Activated T-helper 1 cell treated with anti-CD3 and anti-CD28 coated beads, Interleukin-12 subunit alpha, Interleukin-12 subunit beta, Interleukin-2, Interleukin-4 antibody, amounts not matched to agents 30 ng/mL and 10 ng/mL and 1 ng/mL, durations not matched to agents 14 hours and 24 hours and 36 hours (primary cell): ENCODE measurements at regions of chr6 and their contacts with region 1.

Region 1: DNA sequence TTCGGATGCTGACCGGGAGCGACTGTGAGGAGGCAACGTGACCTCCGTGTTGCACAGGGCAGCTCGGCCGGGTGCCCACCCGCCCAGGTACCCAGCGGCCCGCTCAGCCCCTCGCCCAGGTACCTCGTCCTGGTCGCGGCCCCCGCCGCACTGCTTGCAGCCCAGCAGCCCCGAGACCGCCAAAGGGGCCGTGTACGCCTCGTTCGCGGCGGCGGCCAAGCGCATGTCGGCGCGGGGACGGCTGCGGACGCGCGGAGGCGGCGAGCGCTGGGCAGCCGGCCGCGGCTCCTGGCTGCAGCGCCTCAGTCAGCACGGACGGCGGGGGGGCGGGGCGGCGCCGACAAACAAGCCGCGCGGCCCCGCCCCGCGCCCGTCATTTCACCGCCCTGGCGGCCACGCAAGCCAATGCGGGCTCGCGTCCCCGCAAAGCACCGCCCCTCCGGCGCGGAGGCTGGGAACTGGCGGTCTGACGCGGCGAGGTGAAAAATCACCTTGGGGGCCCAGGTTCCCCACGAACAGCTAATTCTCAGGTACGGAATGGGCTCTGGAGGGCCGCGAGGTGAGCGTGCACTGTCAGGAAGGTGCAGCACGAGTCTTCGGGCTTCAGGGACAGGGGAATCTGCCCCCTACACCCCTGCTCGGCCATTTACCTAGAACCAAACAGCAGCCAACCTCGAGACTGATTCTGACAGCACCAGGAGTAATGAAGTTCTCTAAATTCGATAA is 85.2 kb downstream of the SESN1 start:
- DNase-seq: peak; percentile 87
- H3K4me3 Mint-ChIP-seq: peak overlapping the region; percentile 92
- H3K27ac Mint-ChIP-seq: peak overlapping the region; percentile 84
- H3K4me1 Mint-ChIP-seq: peaks cover 31% of the 10 kb centered on the region
- H3K27me3 Mint-ChIP-seq: no peaks in the 10 kb centered on the region

Region 2: GRCh38 chr6:108558372-108559096 is 450.9 kb before region 1 on chr6:
- intact Hi-C with region 1: loop called (anchors 1 kb)
- DNase-seq: peak; percentile 95
- H3K4me3 Mint-ChIP-seq: peak overlapping the region; percentile 88
- H3K27ac Mint-ChIP-seq: peak overlapping the region; percentile 91
- H3K4me1 Mint-ChIP-seq: peaks cover 32% of the 10 kb centered on the region
- H3K27me3 Mint-ChIP-seq: peaks cover 47% of the 10 kb centered on the region

Region 3: DNA sequence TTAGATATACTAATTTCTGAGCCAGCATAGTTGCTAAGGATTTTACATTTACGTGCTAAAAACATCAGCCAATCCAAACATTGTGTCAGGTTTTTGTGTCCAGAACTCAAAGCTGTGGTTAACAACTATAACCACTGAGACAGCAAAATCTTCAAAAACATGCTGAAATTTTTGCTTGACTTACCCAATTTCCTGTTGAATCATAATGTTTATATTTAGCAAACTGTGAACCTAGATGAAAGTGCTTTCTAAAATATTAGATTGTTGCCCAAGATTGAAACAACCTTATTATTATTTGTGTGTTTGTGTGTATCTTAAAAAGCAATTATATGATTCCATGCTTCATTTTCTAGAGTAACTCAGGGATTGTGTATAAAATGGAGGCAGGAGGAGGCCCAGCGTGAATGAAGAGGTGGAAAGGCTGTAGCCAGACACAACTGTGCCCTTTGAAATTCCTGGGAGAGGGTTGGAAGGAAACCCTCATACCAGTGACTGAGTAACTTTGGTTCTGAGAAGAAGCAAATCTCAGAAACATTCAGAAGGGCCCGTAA is 113.2 kb before region 1 on chr6:
- intact Hi-C with region 1: loop called (anchors 1 kb)
- DNase-seq: no peak
- H3K4me3 Mint-ChIP-seq: peak overlapping the region; percentile 61
- H3K27ac Mint-ChIP-seq: peak overlapping the region; percentile 87
- H3K4me1 Mint-ChIP-seq: peaks cover 50% of the 10 kb centered on the region
- H3K27me3 Mint-ChIP-seq: peaks cover 13% of the 10 kb centered on the region

Region 4: GRCh38 chr6:109059571-109060021 is 50.2 kb after region 1 on chr6:
- intact Hi-C with region 1: loop called (anchors 2 kb)
- DNase-seq: no peak
- H3K4me3 Mint-ChIP-seq: no peak overlapping the region
- H3K27ac Mint-ChIP-seq: peak overlapping the region; percentile 72
- H3K4me1 Mint-ChIP-seq: peaks cover 13% of the 10 kb centered on the region
- H3K27me3 Mint-ChIP-seq: peaks cover 9% of the 10 kb centered on the region

Region 5: DNA sequence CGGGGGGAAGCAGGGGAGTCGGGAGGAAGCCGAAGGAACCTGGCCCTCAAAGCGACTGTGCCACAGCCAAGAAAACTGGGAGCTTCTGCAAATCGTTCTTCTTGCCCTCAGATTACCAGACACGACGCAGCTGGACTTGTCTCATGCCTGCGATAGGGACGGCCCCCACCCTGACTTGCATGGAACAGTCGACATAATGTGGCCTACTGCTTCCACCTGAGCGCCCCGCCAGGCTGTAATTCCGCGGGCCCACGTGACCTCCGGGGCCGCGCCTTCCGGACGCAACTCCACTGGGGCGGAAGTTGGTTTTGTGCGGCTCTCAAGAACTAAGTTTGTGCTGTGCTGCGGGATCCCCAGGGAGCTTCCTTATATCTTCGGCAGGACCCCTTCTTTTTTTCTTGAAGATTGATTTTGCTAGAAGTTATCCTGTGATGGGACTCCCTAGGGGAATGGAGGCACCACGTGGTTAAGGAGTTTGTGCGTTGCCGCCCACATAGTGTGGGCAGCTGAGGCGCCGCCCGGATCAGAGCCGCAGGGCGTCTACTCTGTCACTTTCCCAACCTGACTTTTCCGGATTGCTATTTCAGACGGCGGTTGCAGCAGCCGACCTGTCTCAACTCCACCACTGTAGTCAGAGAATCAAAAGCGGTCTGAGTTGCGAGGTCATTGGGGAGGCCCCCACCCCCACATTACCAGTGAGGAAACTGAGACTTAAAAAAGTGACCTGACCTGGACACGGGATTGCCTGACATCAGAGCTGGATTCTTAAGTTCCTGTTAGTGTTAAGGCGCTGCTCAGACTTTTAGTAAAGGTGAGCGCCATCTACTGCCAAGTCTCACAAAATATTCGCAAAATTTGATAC is 373.4 kb after region 1 on chr6:
- intact Hi-C with region 1: loop called (anchors 2 kb)
- DNase-seq: peak; percentile 88
- H3K4me3 Mint-ChIP-seq: peak overlapping the region; percentile 89
- H3K27ac Mint-ChIP-seq: peak overlapping the region; percentile 98
- H3K4me1 Mint-ChIP-seq: peaks cover 46% of the 10 kb centered on the region
- H3K27me3 Mint-ChIP-seq: peaks cover 6% of the 10 kb centered on the region